ENCODE measurements at regions of chr15 and their contacts with region 1.

Region 1: DNA sequence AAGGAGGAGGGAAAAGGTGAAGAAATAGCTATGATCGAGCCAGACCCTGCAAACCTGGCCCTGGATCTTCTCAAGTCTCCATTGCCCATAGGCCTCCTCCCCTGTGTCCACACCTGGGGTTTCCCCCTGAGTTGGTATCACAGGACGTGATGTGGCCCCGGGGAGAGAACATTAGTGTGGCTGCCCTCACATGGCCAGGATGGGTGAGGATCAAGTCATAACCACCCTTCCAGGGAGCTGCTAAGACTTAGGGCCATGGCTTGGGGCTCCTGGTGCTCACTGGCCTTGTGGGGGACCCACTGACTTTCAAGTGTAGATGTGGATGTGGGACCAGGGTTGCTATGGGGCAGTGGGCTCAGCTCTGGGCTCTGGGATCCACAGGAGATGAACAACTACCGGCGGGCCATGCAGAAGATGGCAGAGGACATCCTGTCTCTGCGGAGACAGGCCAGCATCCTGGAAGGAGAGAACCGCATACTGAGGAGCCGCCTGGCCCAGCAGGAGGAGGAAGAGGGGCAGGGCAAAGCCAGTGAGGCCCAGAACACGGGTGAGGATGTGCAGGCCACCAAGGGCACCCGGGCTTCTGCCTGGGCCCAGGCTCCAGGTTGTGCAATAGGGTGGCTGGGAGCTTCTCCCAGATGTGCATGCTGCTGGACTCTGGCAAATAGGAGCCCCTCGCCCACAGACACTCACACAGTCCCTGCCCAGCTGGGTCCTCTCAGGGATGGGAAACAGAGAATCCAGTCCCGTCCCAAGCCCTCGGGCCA is 37.5 kb downstream of the CYP11A1 start:
- DNase-seq: no peak
- ATAC-seq: no peak
- H3K4me3 ChIP-seq: no peak overlapping the region
- H3K27ac ChIP-seq: no peak overlapping the region
- H3K4me1 ChIP-seq: no peaks in the 10 kb centered on the region
- H3K27me3 ChIP-seq: no peaks in the 10 kb centered on the region
- CTCF ChIP-seq: no peak

Region 2: DNA sequence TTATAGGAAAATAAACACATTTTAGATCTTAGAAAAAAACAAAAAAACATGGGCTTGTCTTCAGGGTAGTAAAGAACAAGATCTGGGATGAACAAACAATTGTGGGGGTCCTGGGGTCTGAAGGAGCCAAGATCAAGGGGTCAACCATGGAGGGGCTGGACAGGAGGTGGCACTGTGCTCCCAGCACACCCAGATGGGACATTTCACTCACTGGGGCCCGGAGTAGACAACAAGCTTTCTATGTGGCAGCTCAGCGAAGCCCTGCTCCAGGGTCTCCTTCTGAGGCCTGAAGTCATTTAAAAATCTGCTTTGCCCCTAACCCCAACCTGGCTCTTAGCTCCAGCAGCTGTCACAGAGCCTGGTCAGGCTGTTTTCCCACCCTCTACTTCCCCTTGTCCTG is 282.2 kb before region 1 on chr15:
- CTCF ChIA-PET with region 1: interaction called, 17 read pairs
- POLR2A ChIA-PET with region 1: no interaction called
- in situ Hi-C with region 1: no loop called
- intact Hi-C with region 1: no loop called
- DNase-seq: no peak
- ATAC-seq: no peak
- H3K4me3 ChIP-seq: no peak overlapping the region
- H3K27ac ChIP-seq: no peak overlapping the region
- H3K4me1 ChIP-seq: no peaks in the 10 kb centered on the region
- H3K27me3 ChIP-seq: no peaks in the 10 kb centered on the region
- CTCF ChIP-seq: no peak

Region 3: DNA sequence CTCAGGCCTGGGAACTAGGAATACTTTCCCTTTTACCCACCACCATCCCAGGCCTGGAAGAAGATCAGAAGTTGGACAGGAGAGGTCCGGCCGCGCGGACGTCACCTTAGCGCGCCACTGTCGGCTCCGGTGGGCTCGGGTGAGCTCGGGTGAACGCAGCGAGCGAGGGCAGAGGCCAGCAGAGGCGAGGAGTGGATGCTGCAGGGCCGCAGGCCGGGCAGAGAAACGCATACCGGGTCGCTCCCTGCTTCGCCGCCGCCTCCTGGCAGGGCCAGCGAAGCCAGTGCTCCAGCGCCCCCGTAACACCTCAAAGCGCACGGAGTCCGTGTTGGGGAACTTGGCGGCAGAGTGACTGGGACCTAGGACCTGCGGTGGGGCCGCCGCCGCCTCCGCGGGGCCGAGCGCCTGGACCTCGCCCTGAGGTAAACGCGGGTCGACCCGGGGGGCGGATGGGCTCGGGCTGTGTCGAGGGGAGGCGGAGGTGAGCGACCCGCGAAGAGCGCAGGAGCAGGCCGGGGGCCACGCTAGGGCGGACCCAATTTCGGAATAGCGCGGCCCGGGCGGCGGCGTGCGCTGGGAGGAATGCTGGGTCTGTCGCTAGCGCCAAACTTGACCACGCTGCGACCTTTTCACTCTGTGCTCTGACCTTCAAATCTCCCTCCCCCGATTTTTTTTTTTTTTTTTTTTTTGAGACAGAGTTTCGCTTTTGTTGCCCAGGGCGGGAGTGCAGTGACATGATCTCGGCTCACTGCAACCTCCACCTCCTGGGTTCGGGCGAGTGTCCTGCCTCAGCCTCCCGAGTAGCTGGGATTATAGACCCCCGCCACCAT is 35.8 kb after region 1 on chr15:
- CTCF ChIA-PET with region 1: no interaction called
- POLR2A ChIA-PET with region 1: no interaction called
- in situ Hi-C with region 1: no loop called
- intact Hi-C with region 1: no loop called
- DNase-seq: no peak
- ATAC-seq: peak; percentile 87
- H3K4me3 ChIP-seq: peak overlapping the region; percentile 42 to 49
- H3K27ac ChIP-seq: peak overlapping the region; percentile 70
- H3K4me1 ChIP-seq: peaks cover 3% of the 10 kb centered on the region; the same call in 1 of the 2 replicates
- H3K27me3 ChIP-seq: no peaks in the 10 kb centered on the region; the same call in 1 of the 2 replicates
- CTCF ChIP-seq: no peak

Region 4: GRCh38 chr15:74614304-74614743 is 284.3 kb after region 1 on chr15:
- CTCF ChIA-PET with region 1: no interaction called
- POLR2A ChIA-PET with region 1: no interaction called
- in situ Hi-C with region 1: no loop called
- intact Hi-C with region 1: no loop called
- DNase-seq: no peak
- ATAC-seq: no peak
- H3K4me3 ChIP-seq: peak overlapping the region; percentile 90 to 100
- H3K27ac ChIP-seq: peak overlapping the region; percentile 65
- H3K4me1 ChIP-seq: peaks cover 11% of the 10 kb centered on the region
- H3K27me3 ChIP-seq: no peaks in the 10 kb centered on the region
- CTCF ChIP-seq: no peak

Measured in Panc1 (cell line).